PC-3 (cell line): ENCODE measurements at regions of chr1 and their contacts with region 1.

Region 1: DNA sequence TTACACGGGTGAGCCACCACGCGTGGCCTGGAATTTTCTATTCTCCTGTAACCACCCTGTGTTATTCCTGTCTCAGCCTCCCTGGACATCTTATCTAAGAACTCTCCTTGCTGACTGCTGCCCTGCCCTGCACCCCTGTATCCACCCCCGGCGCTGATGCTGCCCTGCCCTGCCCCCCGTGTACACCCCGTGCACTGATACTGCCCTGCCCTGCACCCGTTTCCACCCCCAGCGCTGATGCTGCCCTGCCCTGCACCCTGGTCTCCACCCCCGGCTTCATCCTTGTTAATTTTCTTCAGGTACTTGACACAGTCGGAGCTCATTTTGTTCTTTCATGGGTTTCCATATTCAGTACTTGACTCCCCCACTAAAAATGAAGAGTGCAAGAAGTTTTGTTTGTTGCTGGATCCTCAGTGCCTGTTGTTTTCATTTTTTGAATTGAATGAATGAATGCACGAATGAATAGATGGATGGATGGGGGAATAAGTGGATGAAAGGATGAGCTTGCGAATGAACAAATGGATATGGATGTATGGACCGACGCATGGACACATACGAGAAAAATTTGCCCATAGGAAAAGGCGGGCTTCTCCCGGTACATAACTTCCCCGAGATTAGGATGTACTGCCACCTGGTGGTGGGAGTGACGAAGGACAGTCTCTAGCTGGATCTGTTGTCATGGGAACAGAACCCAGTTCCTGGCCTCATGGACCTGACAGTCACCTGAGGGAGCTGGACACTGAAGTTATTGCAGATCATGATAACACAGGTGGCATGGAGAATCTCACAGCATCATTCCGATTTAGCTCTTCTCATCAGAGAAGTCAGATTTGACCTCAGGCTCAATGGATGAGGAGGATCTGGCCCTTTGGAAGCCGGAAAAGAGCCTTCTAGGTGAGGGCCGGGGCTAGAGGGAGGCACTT is 14.9 kb downstream of the AADACL4 start:
- DNase-seq: peak; percentile 96
- ATAC-seq: peak; percentile 93
- H3K4me3 ChIP-seq: peak overlapping the region; percentile 37; the same call in 1 of the 2 replicates
- H3K27ac ChIP-seq: no peak overlapping the region
- H3K4me1 ChIP-seq: no peaks in the 10 kb centered on the region; the same call in 1 of the 2 replicates
- H3K27me3 ChIP-seq: peaks cover 6% of the 10 kb centered on the region; the same call in 1 of the 2 replicates
- CTCF ChIP-seq: peak; percentile 93

Region 2: DNA sequence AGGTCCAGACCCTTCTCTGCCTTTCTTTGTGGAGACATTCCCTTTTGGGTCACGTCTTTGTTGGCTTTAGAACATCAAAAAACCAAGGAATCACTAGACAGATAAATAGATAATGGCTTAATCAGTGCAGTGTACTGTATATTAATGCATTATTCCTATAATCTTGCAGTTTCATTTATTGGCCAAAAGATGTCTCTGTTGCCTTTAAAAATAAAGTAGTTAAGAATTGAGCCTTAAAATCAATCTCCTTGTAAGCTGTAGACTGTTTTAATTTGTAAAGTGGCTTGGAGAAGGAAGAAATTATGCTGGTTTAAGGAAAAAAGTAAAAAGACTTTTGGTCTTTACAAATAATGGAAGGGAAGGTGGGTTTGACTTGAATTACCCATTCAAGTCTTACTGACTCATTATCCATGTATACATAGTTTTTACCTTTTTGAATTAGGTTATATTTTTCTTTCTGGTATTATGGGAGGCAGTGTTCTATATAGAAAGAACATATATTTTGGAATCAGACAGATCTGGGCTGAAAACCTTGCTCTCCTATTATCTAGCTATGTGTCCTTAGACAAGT is 344.4 kb before region 1 on chr1:
- CTCF ChIA-PET with region 1: interaction called, 7 read pairs
- POLR2A ChIA-PET with region 1: no interaction called
- intact Hi-C with region 1: loop called (anchors 1 kb)
- DNase-seq: peak; percentile 44
- ATAC-seq: peak; percentile 67
- H3K4me3 ChIP-seq: no peak overlapping the region
- H3K27ac ChIP-seq: no peak overlapping the region
- H3K4me1 ChIP-seq: no peaks in the 10 kb centered on the region
- H3K27me3 ChIP-seq: no peaks in the 10 kb centered on the region
- CTCF ChIP-seq: peak; percentile 73

Region 3: GRCh38 chr1:12669529-12670068 is 10.8 kb after region 1 on chr1:
- CTCF ChIA-PET with region 1: no interaction called
- POLR2A ChIA-PET with region 1: no interaction called
- intact Hi-C with region 1: no loop called
- DNase-seq: no peak
- ATAC-seq: no peak
- H3K4me3 ChIP-seq: no peak overlapping the region
- H3K27ac ChIP-seq: no peak overlapping the region
- H3K4me1 ChIP-seq: no peaks in the 10 kb centered on the region
- H3K27me3 ChIP-seq: peaks cover 36% of the 10 kb centered on the region
- CTCF ChIP-seq: no peak